ENCODE measurements at regions of chr5 and their contacts with region 1.

Region 1: GRCh38 chr5:101390151-101390908 is 487.2 kb upstream of the ST8SIA4 start:
- DNase-seq: peak; percentile 23
- H3K4me3 ChIP-seq: no peak overlapping the region
- H3K27ac ChIP-seq: no peak overlapping the region
- H3K4me1 ChIP-seq: no peaks in the 10 kb centered on the region
- H3K27me3 ChIP-seq: no peaks in the 10 kb centered on the region
- CTCF ChIP-seq: peak; percentile 34

Region 2: DNA sequence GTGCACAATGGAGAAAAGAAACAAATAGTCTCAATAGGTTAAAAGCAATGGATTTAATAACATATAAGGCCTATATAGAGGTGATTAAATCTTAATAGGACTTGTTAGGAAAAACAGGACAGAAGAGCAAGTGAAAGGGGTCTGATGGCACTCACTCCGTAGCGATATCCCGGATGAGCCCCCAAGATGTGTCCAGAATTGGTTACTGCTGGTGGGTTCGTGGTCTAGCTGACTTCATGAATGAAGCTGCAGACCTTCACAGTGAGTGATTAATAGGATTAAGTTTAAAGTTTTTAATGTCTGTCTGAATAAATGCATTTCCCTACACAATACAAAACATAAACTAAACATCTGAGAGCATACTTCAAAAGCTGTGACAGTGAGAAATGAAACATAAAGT is 965.5 kb before region 1 on chr5:
- intact Hi-C with region 1: loop called (anchors 5 kb)
- DNase-seq: no peak
- H3K4me3 ChIP-seq: no peak overlapping the region
- H3K27ac ChIP-seq: no peak overlapping the region
- H3K4me1 ChIP-seq: no peaks in the 10 kb centered on the region
- H3K27me3 ChIP-seq: no peaks in the 10 kb centered on the region
- CTCF ChIP-seq: no peak

Region 3: GRCh38 chr5:100479079-100479688 is 911.1 kb before region 1 on chr5:
- intact Hi-C with region 1: loop called (anchors 5 kb)
- DNase-seq: no peak
- H3K4me3 ChIP-seq: no peak overlapping the region
- H3K27ac ChIP-seq: no peak overlapping the region
- H3K4me1 ChIP-seq: no peaks in the 10 kb centered on the region
- H3K27me3 ChIP-seq: no peaks in the 10 kb centered on the region
- CTCF ChIP-seq: no peak